Breast epithelium (tissue), 4 donors: ENCODE measurements at regions of chr12 and their contacts with region 1.

Region 1: DNA sequence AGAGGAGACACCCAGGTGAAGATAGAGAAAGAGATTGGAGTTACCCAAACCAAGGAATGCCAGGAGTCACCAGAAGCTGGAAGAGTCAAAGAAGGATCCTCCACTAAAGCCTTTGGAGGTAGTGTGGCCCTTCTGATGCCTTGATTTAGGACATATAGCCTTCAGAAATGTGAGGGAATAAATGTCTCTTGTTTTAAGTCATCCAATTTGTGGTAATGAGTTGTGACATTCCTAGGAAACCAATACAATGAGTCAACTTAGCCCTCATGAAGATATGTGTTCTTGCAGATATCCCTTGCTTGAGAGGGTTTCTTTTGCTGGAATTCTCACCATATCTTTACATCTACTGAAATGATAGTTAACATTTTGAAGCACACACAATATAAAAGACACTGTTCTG is 58.8 kb downstream of the CCER1 start:
- DNase-seq: no peak
- H3K4me3 ChIP-seq: no peak overlapping the region
- H3K27ac ChIP-seq: no peak overlapping the region
- H3K4me1 ChIP-seq: no peaks in the 10 kb centered on the region
- H3K27me3 ChIP-seq: no peaks in the 10 kb centered on the region
- CTCF ChIP-seq: no peak
- POLR2A ChIP-seq: no peak

Region 2: GRCh38 chr12:90254796-90255195 is 641.4 kb before region 1 on chr12:
- intact Hi-C with region 1: loop called (anchors 5 kb)
- DNase-seq: no peak
- H3K4me3 ChIP-seq: no peak overlapping the region
- H3K27ac ChIP-seq: no peak overlapping the region
- H3K4me1 ChIP-seq: peaks cover 0 to 5% of the 10 kb centered on the region in 2 donors
- H3K27me3 ChIP-seq: no peaks in the 10 kb centered on the region
- CTCF ChIP-seq: no peak
- POLR2A ChIP-seq: no peak

Region 3: GRCh38 chr12:90936230-90937005 is 40.3 kb after region 1 on chr12:
- intact Hi-C with region 1: loop called (anchors 2 kb)
- DNase-seq: no peak
- H3K4me3 ChIP-seq: no peak overlapping the region
- H3K27ac ChIP-seq: no peak overlapping the region
- H3K4me1 ChIP-seq: no peaks in the 10 kb centered on the region
- H3K27me3 ChIP-seq: no peaks in the 10 kb centered on the region
- CTCF ChIP-seq: no peak
- POLR2A ChIP-seq: no peak